Right ventricle myocardium superior (tissue), 1 donor: ENCODE measurements at regions of chr4 and their contacts with region 1.

Region 1: DNA sequence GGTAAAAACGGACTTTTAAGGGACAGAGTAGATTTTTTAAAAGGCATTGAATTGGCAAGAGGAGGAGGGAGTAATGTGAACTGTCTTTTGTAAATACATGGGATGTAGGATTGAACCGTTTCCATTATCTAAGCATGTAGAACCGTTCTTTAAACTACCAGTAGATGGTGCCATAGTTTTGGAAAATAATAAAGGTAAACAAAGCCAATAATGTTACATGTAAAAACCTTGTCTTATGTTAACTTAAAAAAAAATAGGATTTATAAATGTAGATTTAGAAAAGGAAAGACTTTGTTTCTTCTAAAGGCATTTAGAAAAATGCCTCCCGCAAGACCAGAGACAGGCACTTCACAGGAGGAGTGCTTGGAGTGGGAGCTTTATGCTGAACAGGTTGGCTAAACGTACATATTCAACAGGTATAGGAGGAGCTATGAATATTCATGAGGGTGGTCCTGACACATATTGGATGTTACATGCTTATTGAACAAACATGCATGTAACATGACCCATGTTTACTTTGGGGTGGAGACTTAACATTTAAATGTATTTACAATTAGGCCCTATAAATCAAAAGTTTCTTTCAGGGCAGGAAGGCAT is 45.5 kb upstream of the FAM241A start:
- DNase-seq: no peak
- ATAC-seq: peak; percentile 91

Region 2: GRCh38 chr4:112231779-112232713 is 132.2 kb after region 1 on chr4 and contains the start of gene AP1AR:
- intact Hi-C with region 1: loop called (anchors 2 kb)
- DNase-seq: peak; percentile 89
- ATAC-seq: peak; percentile 87
- total RNA-seq, gene AP1AR: 11.1 TPM